Tibial artery (tissue), 4 donors: ENCODE measurements at regions of chr9 and their contacts with region 1.

Region 1: DNA sequence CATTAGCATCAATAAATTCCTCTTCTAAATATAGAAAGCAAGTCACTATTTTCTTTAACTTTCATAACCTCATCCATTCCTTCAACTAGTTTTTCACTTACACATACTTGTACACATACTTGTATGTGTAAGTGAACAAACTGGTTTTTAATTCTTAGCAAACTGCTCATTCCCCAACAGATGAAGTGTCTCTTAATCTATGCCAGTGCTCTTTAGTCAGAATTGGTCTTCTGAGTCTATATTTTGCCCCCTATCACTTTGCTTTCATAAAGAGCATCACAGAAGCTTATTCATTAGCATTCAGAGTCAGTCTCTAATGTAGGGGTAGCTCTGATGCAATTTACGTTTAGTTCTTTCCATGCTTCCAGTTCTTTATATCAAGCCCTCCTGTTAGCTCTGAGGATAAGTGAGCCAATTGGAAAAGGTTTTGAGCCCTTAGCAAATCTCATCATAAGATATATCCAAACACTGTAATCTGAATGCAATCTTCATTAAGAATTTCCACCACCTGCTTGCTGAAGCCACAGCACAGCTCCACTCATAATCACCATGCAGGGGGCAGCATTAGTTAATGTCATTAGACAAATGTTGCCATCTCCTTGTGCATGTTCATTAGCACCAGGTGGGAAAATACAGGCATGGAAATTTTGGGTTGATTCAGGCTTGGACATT is 178.5 kb upstream of the SLC24A2 start:
- DNase-seq: no peak
- H3K4me3 ChIP-seq: no peak overlapping the region
- H3K27ac ChIP-seq: no peak overlapping the region
- H3K4me1 ChIP-seq: no peaks in the 10 kb centered on the region
- H3K27me3 ChIP-seq: no peaks in the 10 kb centered on the region
- CTCF ChIP-seq: no peak

Region 2: GRCh38 chr9:20028849-20029231 is 61.5 kb after region 1 on chr9:
- intact Hi-C with region 1: loop called (anchors 5 kb)
- DNase-seq: no peak
- H3K4me3 ChIP-seq: no peak overlapping the region
- H3K27ac ChIP-seq: no peak overlapping the region
- H3K4me1 ChIP-seq: peaks cover 0 to 5% (median 0%) of the 10 kb centered on the region in 4 donors
- H3K27me3 ChIP-seq: no peaks in the 10 kb centered on the region
- CTCF ChIP-seq: no peak